ENCODE measurements at regions of chr1 and their contacts with region 1.

Region 1: GRCh38 chr1:25743826-25744581 is 56.0 kb upstream of the SELENON start:
- DNase-seq: peak; percentile 93
- H3K4me3 ChIP-seq: no peak overlapping the region
- H3K27ac ChIP-seq: peak overlapping the region; percentile 87 to 94 (median 90)
- H3K4me1 ChIP-seq: peaks cover 0 to 56% (median 37%) of the 10 kb centered on the region in 4 donors
- H3K27me3 ChIP-seq: no peaks in the 10 kb centered on the region
- CTCF ChIP-seq: peak; percentile 50 to 68 (median 56)
- EP300 ChIP-seq: peak in 1 of 4 donors; percentile 33
- POLR2A ChIP-seq: no peak

Region 2: DNA sequence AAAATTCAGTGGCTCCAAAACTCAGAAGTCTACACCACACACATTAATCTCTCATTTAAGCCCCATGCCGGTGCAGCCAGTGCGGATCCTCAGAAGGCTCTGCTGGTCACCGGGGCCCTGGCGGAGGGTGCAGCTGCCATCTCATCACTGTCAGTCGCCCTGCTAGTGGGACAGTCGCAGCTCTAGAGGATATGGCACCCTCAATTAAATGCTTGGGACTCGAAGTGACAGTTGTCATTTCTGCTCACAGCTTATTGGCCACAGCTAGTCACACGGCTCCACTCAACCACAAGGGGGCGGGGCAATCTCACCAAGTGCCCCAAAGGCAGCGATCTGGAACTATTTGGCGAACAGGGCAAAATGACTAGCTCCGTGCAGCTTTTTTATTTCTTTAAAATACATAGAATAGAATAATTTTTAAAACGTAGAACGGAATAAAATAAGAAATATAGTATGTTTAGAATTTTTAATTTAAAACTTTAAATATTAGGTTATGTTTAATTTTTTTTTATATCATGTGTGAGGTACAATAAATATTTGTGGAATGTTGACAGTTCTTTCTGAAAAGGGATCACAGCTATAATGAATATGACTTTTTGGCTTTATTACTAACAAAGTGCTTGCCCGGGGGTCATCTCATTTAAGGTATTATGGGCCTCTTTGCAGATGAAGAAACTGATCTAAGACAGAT is 135.4 kb before region 1 on chr1:
- intact Hi-C with region 1: loop called (anchors 2 kb)
- DNase-seq: peak; percentile 93
- H3K4me3 ChIP-seq: no peak overlapping the region
- H3K27ac ChIP-seq: peak overlapping the region in 1 of 4 donors; percentile 71
- H3K4me1 ChIP-seq: peaks cover 0 to 29% (median 18%) of the 10 kb centered on the region in 4 donors
- H3K27me3 ChIP-seq: no peaks in the 10 kb centered on the region
- CTCF ChIP-seq: peak; percentile 81 to 91 (median 82)
- EP300 ChIP-seq: no peak
- POLR2A ChIP-seq: no peak

Region 3: GRCh38 chr1:25616095-25616986 is 127.7 kb before region 1 on chr1 and contains the start of gene MAN1C1:
- intact Hi-C with region 1: loop called (anchors 2 kb)
- DNase-seq: peak; percentile 93
- H3K4me3 ChIP-seq: peak within 1 kb of the TSS; percentile 70 to 98 (median 80)
- H3K27ac ChIP-seq: peak within 1 kb of the TSS; percentile 88 to 94 (median 89)
- H3K4me1 ChIP-seq: peaks cover 0 to 52% (median 48%) of the 10 kb centered on the region in 4 donors
- H3K27me3 ChIP-seq: no peaks in the 10 kb centered on the region
- CTCF ChIP-seq: peak; percentile 46 to 65 (median 55)
- EP300 ChIP-seq: no peak
- POLR2A ChIP-seq: no peak
- total RNA-seq, gene MAN1C1: 12.8 to 32.1 (median 22.9) TPM

Region 4: DNA sequence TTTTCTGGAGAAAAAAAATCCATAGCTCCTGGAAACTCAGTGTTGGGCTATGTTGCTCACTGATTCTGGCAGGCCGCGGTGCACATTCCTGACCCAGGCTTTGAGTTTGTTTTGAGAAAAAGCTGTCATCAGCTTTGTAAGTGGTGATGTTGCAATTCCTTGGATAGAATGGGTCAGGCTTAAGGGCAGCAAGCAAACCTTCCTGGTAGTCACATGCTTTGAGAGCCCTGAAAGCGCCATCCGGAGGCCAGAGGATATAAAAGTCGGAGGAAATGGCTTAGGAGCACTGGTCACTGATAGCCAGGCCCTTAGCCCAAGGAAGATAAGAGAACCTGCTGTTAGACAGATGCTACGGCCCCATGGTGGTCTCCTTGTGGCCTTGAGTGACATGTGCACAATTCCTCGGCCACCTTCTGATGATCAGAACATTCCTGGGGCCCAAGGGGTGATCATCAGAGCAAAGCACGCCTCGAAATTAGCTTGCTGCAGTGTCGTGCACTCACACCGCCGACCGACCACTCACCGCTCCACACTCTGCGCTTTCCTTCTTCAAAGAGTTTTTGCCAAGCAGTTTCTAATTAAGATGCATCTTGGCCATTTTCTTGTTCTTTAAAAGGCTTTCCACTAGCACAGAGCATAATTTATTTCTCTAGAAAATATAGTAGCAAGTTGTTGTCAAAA is 48.8 kb before region 1 on chr1:
- intact Hi-C with region 1: loop called (anchors 2 kb)
- DNase-seq: peak; percentile 94
- H3K4me3 ChIP-seq: no peak overlapping the region
- H3K27ac ChIP-seq: peak overlapping the region; percentile 81 to 90 (median 88)
- H3K4me1 ChIP-seq: peaks cover 0 to 73% (median 69%) of the 10 kb centered on the region in 4 donors
- H3K27me3 ChIP-seq: no peaks in the 10 kb centered on the region
- CTCF ChIP-seq: peak in 1 of 4 experiments; percentile 13
- EP300 ChIP-seq: peak in 2 of 4 donors; percentile 79 to 83
- POLR2A ChIP-seq: no peak

Region 5: DNA sequence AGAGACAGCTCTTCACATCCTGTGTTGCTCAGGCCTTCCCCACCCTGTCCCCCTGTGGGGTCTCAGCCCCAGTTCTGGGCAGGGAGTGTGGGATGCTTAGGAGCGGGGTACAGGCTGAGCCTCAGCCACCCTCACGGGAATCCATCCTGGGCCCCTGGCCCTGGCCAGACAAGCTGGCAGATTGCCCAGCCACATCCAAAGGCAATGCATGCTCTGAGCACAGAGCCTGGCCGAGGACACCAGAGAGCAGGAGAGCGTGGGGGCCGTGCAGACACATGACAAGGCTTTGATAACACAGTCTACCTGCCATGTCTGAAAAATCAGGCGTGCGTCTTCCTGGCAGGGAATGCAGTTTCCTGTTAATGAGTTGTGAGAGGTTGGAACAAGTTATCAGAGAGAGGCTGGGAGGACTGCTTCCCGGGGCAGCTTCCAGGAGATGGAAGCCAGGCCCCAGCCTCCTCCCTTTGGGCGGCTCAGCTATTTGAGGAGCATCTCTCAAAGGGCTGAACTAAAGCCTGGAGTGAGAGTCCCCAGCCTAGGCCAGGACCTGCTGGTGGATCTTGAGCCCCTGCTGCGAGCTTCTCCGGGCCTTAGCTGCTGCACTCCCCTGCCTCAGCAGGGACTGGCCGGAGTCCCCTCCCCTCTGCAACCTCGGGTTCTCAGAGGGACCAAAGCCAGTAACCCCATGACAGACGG is 16.2 kb before region 1 on chr1:
- intact Hi-C with region 1: loop called (anchors 2 kb)
- DNase-seq: peak; percentile 89
- H3K4me3 ChIP-seq: no peak overlapping the region
- H3K27ac ChIP-seq: peak overlapping the region; percentile 56 to 84 (median 75)
- H3K4me1 ChIP-seq: peaks cover 0 to 53% (median 36%) of the 10 kb centered on the region in 4 donors
- H3K27me3 ChIP-seq: no peaks in the 10 kb centered on the region
- CTCF ChIP-seq: no peak
- EP300 ChIP-seq: peak in 1 of 4 donors; percentile 14
- POLR2A ChIP-seq: no peak

Region 6: GRCh38 chr1:25796811-25797458 is 52.9 kb after region 1 on chr1:
- intact Hi-C with region 1: loop called (anchors 2 kb)
- DNase-seq: peak; percentile 90
- H3K4me3 ChIP-seq: no peak overlapping the region
- H3K27ac ChIP-seq: peak overlapping the region in 2 of 4 donors; percentile 40
- H3K4me1 ChIP-seq: peaks cover 0 to 41% (median 26%) of the 10 kb centered on the region in 4 donors
- H3K27me3 ChIP-seq: no peaks in the 10 kb centered on the region
- CTCF ChIP-seq: peak; percentile 71 to 84 (median 84)
- EP300 ChIP-seq: no peak
- POLR2A ChIP-seq: no peak

Region 7: DNA sequence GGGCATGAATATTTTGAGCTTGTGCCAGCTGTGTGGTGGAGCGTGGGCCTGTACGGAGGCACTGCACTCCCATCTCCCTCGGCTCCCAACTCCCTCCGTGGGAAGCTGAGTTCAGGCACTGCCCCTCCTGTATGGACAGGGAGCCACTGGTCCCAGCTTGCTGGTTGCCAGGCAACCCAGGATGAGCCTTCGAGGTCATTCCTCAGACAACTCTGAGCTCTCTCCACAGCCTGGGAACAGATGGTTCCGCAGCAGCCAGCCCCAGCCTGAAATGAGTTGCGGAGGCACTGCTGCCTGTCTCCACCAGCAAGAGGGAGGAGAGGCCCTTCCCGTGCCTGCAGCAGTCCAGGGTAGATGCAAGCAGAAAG is 1327.0 kb after region 1 on chr1:
- intact Hi-C with region 1: no loop called
- DNase-seq: no peak
- H3K4me3 ChIP-seq: no peak overlapping the region
- H3K27ac ChIP-seq: no peak overlapping the region
- H3K4me1 ChIP-seq: no peaks in the 10 kb centered on the region
- H3K27me3 ChIP-seq: no peaks in the 10 kb centered on the region
- CTCF ChIP-seq: no peak
- EP300 ChIP-seq: no peak
- POLR2A ChIP-seq: no peak

Measured in sigmoid colon (tissue), 7 donors.